Body of pancreas (tissue), 4 donors: ENCODE measurements at regions of chr7 and their contacts with region 1.

Region 1: GRCh38 chr7:128209229-128210035 is 31.6 kb upstream of the LEP start:
- DNase-seq: peak; percentile 71 to 77 (median 74)
- ATAC-seq: peak; percentile 88
- H3K4me3 ChIP-seq: no peak overlapping the region
- H3K27ac ChIP-seq: no peak overlapping the region
- H3K4me1 ChIP-seq: no peaks in the 10 kb centered on the region
- H3K27me3 ChIP-seq: no peaks in the 10 kb centered on the region
- CTCF ChIP-seq: peak; percentile 98 to 99 (median 98)
- POLR2A ChIP-seq: no peak

Region 2: DNA sequence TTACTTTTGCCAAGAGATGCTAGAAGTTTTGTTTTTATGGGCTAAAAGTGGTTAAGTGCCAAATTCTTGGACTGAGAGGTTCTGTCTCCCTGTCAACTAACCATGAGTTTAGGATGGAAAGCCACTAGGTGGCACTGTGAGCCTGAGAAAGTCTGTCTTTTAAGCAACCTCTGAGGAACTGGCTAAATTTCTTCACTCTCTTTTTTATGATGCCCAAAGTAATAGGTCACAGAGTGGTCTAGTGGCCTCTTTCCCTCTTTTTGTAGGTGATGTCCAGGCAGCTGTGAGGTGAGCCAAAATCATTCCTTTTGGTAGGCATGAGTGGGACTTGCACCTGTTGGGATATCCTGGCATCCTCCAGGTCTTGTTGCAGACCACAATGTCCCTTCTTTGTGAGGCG is 500.6 kb before region 1 on chr7:
- intact Hi-C with region 1: loop called (anchors 10 kb)
- DNase-seq: peak; percentile 71 to 85 (median 76)
- ATAC-seq: peak; percentile 75
- H3K4me3 ChIP-seq: no peak overlapping the region
- H3K27ac ChIP-seq: no peak overlapping the region
- H3K4me1 ChIP-seq: peaks cover 6% of the 10 kb centered on the region
- H3K27me3 ChIP-seq: no peaks in the 10 kb centered on the region
- CTCF ChIP-seq: peak; percentile 45 to 76 (median 68)
- POLR2A ChIP-seq: no peak

Region 3: GRCh38 chr7:128141683-128142195 is 67.7 kb before region 1 on chr7:
- intact Hi-C with region 1: loop called (anchors 5 kb)
- DNase-seq: no peak
- ATAC-seq: no peak
- H3K4me3 ChIP-seq: no peak overlapping the region
- H3K27ac ChIP-seq: no peak overlapping the region
- H3K4me1 ChIP-seq: no peaks in the 10 kb centered on the region
- H3K27me3 ChIP-seq: peaks cover 0 to 4% of the 10 kb centered on the region in 2 donors
- CTCF ChIP-seq: no peak
- POLR2A ChIP-seq: no peak